ENCODE measurements at regions of chr15 and their contacts with region 1.

Region 1: DNA sequence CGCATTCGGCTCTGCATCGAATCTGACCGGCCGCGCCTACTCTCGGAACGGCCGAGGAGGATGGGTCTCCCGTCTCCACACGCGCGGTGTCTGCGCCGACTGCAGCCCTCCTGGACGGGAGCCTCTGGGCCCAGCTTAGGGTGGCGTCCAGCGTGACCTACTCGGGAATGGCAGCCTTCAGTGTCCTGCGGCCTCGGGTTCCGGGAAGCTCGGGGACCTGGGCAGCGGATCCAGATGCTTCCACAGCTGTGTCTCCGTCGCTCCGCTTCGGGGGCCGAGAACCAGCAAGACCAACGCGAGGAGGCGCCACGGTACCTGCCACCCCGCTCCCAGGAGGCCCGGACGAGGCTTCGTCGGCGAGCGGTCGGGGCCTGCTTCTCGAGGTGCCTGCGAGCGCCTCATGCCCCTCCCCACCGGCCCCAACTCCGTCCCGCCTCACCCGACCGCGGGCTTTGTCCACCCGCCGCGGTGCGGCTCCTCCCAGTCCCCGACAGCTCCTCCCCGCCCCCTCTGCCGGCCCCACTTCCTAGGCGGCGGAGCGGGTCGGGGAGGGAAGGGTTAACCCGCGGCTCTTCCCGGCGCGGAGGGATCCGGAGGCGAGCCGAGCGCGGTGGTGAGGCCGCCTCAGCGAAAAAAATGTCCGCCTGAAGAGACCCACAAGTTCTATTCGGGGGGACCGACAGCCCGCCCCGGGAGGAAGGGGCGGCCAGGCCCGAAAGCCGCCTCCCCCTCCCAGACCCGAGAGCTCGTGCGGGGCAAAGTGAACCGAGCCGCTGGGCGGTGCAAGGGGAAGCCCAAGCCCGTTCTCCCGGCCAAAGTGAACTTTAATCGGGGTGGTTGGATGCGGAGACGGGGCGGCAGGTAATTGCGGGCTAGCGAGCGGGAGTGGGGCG is at the start of gene TCF12:
- DNase-seq: peak; percentile 86 to 96 (median 92)
- ATAC-seq: peak; percentile 92
- H3K4me3 ChIP-seq: peak within 1 kb of the TSS; percentile 91
- H3K4me3 Mint-ChIP-seq: peak within 1 kb of the TSS; percentile 82 to 94 (median 90)
- H3K27ac ChIP-seq: peak within 1 kb of the TSS; percentile 86
- H3K27ac Mint-ChIP-seq: peak within 1 kb of the TSS; percentile 73 to 91 (median 84)
- H3K4me1 ChIP-seq: peaks cover 14 to 32% of the 10 kb centered on the region in 2 donors
- H3K4me1 Mint-ChIP-seq: peaks cover 18 to 55% (median 44%) of the 10 kb centered on the region in 7 donors
- H3K27me3 ChIP-seq: no peaks in the 10 kb centered on the region
- H3K27me3 Mint-ChIP-seq: no peaks in the 10 kb centered on the region
- total RNA-seq, gene TCF12: 71.5 to 99.4 (median 84.0) TPM

Region 2: GRCh38 chr15:56496635-56497034 is 421.7 kb before region 1 on chr15:
- CTCF ChIA-PET with region 1: no interaction called
- POLR2A ChIA-PET with region 1: no interaction called
- intact Hi-C with region 1: loop called in 1 of 2 experiments (anchors 2 kb)
- DNase-seq: peak in 5 of 9 donors; percentile 19 to 42 (median 35)
- ATAC-seq: peak; percentile 69
- H3K4me3 ChIP-seq: no peak overlapping the region
- H3K4me3 Mint-ChIP-seq: peak overlapping the region in 2 of 10 donors; percentile 14 to 40
- H3K27ac ChIP-seq: no peak overlapping the region
- H3K27ac Mint-ChIP-seq: no peak overlapping the region
- H3K4me1 ChIP-seq: no peaks in the 10 kb centered on the region
- H3K4me1 Mint-ChIP-seq: peaks cover 0 to 8% (median 3%) of the 10 kb centered on the region in 7 donors
- H3K27me3 ChIP-seq: no peaks in the 10 kb centered on the region
- H3K27me3 Mint-ChIP-seq: peaks cover 9 to 32% (median 20%) of the 10 kb centered on the region in 5 donors

Region 3: GRCh38 chr15:56886932-56887781 is 31.1 kb before region 1 on chr15:
- CTCF ChIA-PET with region 1: interaction called, 3 read pairs
- POLR2A ChIA-PET with region 1: interaction called, 38 read pairs
- intact Hi-C with region 1: loop called (anchors 1 kb)
- DNase-seq: peak; percentile 74 to 86 (median 80)
- ATAC-seq: peak; percentile 91
- H3K4me3 ChIP-seq: peak overlapping the region; percentile 80
- H3K4me3 Mint-ChIP-seq: peak overlapping the region; percentile 82 to 96 (median 88)
- H3K27ac ChIP-seq: peak overlapping the region; percentile 86
- H3K27ac Mint-ChIP-seq: peak overlapping the region; percentile 80 to 98 (median 93)
- H3K4me1 ChIP-seq: peaks cover 9 to 12% of the 10 kb centered on the region in 2 donors
- H3K4me1 Mint-ChIP-seq: peaks cover 17 to 35% (median 26%) of the 10 kb centered on the region in 7 donors
- H3K27me3 ChIP-seq: no peaks in the 10 kb centered on the region
- H3K27me3 Mint-ChIP-seq: peaks cover 0 to 8% (median 0%) of the 10 kb centered on the region in 5 donors

Region 4: DNA sequence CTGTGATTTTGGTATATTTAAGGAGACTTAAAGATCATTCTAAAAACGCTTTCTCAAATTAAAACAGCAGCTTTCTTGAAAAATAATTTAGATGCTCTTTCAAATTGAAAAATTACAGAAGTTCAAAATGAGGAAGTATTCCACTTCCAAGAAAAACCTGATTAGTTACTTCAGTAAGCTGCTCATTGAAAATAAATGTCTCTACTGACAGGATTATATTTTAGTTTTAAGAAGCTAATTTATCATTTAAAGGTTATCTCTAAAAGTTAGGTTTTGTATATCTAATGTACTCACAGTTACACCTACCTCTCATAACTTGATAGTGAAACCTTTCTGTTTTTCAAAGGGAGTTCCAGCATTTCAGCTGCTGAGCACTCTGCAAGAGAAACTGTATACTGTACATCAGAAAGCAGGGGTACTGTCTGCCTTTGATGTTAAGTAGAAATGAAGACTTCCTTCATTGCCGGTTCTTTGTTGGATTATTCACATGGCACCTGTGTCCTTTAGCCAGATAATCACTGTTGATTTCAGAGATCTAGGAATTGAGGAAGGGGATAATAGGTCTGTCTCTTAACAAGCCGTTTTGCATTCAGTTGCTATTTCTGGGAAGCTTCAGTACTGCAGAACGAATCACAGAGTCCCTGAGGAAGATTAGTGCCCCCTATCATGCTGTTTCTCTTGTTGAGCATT is 161.8 kb after region 1 on chr15:
- CTCF ChIA-PET with region 1: no interaction called
- POLR2A ChIA-PET with region 1: no interaction called
- intact Hi-C with region 1: loop called in 1 of 2 experiments (anchors 5 kb)
- DNase-seq: peak in 3 of 9 donors; percentile 2 to 8 (median 6)
- ATAC-seq: no peak
- H3K4me3 ChIP-seq: no peak overlapping the region
- H3K4me3 Mint-ChIP-seq: peak overlapping the region in 2 of 10 donors; percentile 23 to 30
- H3K27ac ChIP-seq: no peak overlapping the region
- H3K27ac Mint-ChIP-seq: peak overlapping the region in 2 of 9 donors; percentile 17 to 60
- H3K4me1 ChIP-seq: peaks cover 0 to 4% of the 10 kb centered on the region in 2 donors
- H3K4me1 Mint-ChIP-seq: peaks cover 20 to 57% (median 48%) of the 10 kb centered on the region in 7 donors
- H3K27me3 ChIP-seq: no peaks in the 10 kb centered on the region
- H3K27me3 Mint-ChIP-seq: no peaks in the 10 kb centered on the region

Region 5: DNA sequence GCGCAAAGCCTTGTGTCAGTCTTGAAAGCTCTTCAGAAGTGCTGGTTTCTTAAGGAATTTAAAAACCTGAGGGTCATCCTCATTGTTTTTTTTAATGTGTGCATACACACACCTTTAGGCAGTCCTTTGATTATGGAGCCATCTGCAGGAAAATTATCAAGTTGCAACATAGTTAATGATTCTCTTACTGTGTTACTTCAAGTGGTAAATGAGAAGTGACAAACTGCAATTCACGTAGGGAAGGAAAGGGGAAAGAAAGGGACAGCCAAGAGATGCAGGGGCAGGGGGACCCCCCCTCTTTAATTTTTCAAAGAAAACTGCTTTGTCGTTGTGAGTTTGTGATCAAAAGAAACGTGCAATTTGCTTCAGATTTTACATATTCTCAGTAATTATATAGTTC is 295.6 kb after region 1 on chr15:
- CTCF ChIA-PET with region 1: interaction called, 4 read pairs
- POLR2A ChIA-PET with region 1: no interaction called
- intact Hi-C with region 1: loop called in 1 of 2 experiments (anchors 10 kb)
- DNase-seq: peak in 5 of 9 donors; percentile 5 to 31 (median 14)
- ATAC-seq: peak; percentile 42
- H3K4me3 ChIP-seq: no peak overlapping the region
- H3K4me3 Mint-ChIP-seq: no peak overlapping the region
- H3K27ac ChIP-seq: no peak overlapping the region
- H3K27ac Mint-ChIP-seq: no peak overlapping the region
- H3K4me1 ChIP-seq: no peaks in the 10 kb centered on the region
- H3K4me1 Mint-ChIP-seq: peaks cover 2 to 59% (median 42%) of the 10 kb centered on the region in 7 donors
- H3K27me3 ChIP-seq: no peaks in the 10 kb centered on the region
- H3K27me3 Mint-ChIP-seq: no peaks in the 10 kb centered on the region

Region 6: GRCh38 chr15:57706405-57707209 is 788.3 kb after region 1 on chr15 and contains the start of gene POLR2M:
- CTCF ChIA-PET with region 1: no interaction called
- POLR2A ChIA-PET with region 1: no interaction called
- intact Hi-C with region 1: loop called in 1 of 2 experiments (anchors 5 kb)
- DNase-seq: peak; percentile 67 to 97 (median 91)
- ATAC-seq: peak; percentile 94
- H3K4me3 ChIP-seq: peak within 1 kb of the TSS; percentile 88
- H3K4me3 Mint-ChIP-seq: peak within 1 kb of the TSS; percentile 83 to 93 (median 89)
- H3K27ac ChIP-seq: peak within 1 kb of the TSS; percentile 92
- H3K27ac Mint-ChIP-seq: peak within 1 kb of the TSS; percentile 63 to 99 (median 97)
- H3K4me1 ChIP-seq: peaks cover 17 to 38% of the 10 kb centered on the region in 2 donors
- H3K4me1 Mint-ChIP-seq: peaks cover 51 to 96% (median 94%) of the 10 kb centered on the region in 7 donors
- H3K27me3 ChIP-seq: no peaks in the 10 kb centered on the region
- H3K27me3 Mint-ChIP-seq: peaks cover 0 to 3% (median 0%) of the 10 kb centered on the region in 5 donors
- total RNA-seq, gene POLR2M: 67.0 to 105 (median 82.9) TPM

Measured in naive thymus-derived CD4-positive, alpha-beta T cell (primary cell).